Mammary epithelial cell (primary cell): ENCODE measurements at regions of chr6 and their contacts with region 1.

Region 1: DNA sequence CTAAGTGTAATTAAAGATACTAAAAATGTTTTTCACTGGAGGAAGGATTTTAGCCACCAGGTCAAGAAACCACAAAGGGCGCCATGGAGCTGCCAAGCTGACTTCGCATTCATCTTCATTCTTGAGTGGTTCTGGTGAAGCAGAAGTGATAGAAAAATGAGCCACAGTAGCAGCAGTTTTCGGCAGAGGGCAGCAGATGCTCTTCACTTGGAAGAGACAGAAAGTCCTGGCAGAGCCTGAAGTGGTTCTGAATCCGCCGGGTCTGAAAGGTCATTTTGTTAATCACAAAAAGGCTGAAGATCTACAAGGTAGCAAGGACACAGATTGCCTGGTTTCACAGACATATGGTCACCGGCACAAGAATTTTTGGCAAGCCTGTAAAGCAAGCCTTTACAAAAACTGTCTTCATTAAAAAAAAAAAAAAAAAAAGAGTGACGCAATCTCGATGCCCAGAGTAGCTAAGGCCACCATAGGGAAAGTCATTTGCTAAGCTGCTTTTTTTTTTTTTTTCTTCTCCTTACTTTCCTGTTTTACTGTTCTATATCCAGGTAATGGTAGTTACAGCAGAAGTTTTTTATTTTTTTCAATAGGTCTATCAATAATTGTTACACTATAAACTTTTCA is 345.1 kb upstream of the AGPAT4 start:
- DNase-seq: peak; percentile 35
- H3K4me3 ChIP-seq: peak overlapping the region in 1 of 3 experiments; percentile 14
- H3K27ac ChIP-seq: no peak overlapping the region
- H3K4me1 ChIP-seq: no peaks in the 10 kb centered on the region
- H3K27me3 ChIP-seq: no peaks in the 10 kb centered on the region
- CTCF ChIP-seq: peak; percentile 36 to 70

Region 2: GRCh38 chr6:161429921-161430490 is 188.9 kb before region 1 on chr6:
- CTCF ChIA-PET with region 1: no interaction called
- dilution Hi-C with region 1: no loop called
- in situ Hi-C with region 1: no loop called
- intact Hi-C with region 1: loop called (anchors 10 kb)
- DNase-seq: no peak
- H3K4me3 ChIP-seq: no peak overlapping the region
- H3K27ac ChIP-seq: no peak overlapping the region
- H3K4me1 ChIP-seq: peaks cover 16% of the 10 kb centered on the region
- H3K27me3 ChIP-seq: no peaks in the 10 kb centered on the region
- CTCF ChIP-seq: peak; percentile 10 to 25

Region 3: GRCh38 chr6:161847628-161848027 is 228.7 kb after region 1 on chr6:
- CTCF ChIA-PET with region 1: no interaction called
- dilution Hi-C with region 1: no loop called
- in situ Hi-C with region 1: no loop called
- intact Hi-C with region 1: no loop called
- DNase-seq: no peak
- H3K4me3 ChIP-seq: no peak overlapping the region
- H3K27ac ChIP-seq: no peak overlapping the region
- H3K4me1 ChIP-seq: no peaks in the 10 kb centered on the region
- H3K27me3 ChIP-seq: no peaks in the 10 kb centered on the region
- CTCF ChIP-seq: no peak